H1 (cell line): ENCODE measurements at regions of chr1 and their contacts with region 1.

Region 1: GRCh38 chr1:223845810-223846682 is at the start of gene TP53BP2:
- DNase-seq: peak; percentile 65 to 88
- H3K4me3 ChIP-seq: peak within 1 kb of the TSS; percentile 86 to 92 (median 88)
- H3K27ac ChIP-seq: peak within 1 kb of the TSS; percentile 99
- H3K4me1 ChIP-seq: no peaks in the 10 kb centered on the region; a peak in 4 of 7 replicates
- H3K27me3 ChIP-seq: no peaks in the 10 kb centered on the region; a peak in 1 of 7 replicates
- CTCF ChIP-seq: peak; percentile 54 to 59 (median 57)
- EP300 ChIP-seq: no peak
- POLR2A ChIP-seq: peak; percentile 50 to 88
- RAD21 ChIP-seq: peak; percentile 26 to 38; a peak in 3 of 4 replicates
- total RNA-seq, gene TP53BP2: 38.7 and 38.9 TPM in 2 replicates

Region 2: DNA sequence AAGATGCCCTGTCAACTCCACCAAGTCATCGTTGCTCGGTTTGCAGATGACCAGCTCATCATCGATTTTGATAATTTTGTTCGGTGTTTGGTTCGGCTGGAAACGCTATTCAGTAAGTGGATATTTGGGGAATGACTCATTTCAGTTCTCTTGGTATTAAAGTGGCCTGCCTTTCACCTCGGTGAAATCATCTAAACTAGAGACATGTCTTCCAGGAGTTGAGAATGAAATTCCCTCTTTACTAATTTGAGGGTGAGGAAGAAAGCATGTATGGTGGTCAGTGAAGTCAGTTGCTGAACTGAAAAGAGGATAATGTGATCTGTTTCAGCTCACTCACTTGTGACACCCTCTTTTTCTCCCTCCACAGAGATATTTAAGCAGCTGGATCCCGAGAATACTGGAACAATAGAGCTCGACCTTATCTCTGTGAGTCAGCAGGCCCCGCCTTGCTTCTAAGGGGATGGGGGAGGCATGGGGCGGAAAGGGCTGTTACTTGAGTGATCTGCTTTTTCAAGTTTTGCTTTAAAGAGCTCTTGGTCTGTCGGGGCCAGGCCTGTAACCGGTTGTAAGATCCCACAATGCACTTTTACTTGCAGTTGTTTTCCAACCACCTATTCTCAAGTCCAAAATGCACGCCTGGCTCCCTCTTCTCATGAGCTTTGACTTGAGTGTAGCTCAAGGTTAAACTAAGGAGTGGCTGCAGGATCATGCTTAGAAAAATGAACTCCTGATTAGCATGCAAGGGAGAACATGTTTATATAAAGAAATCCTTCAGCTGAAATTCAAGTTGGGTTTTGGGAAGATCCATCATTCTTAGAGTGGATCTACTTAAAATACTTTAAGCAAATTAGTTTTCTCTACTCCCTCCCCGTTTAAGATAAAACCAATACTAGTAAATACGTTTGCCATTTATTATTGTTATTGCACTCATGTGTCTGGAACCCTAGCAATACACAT is 74.0 kb before region 1 on chr1:
- CTCF ChIA-PET with region 1: no interaction called
- POLR2A ChIA-PET with region 1: no interaction called
- DNase-seq: peak in 1 of 2 experiments; percentile 45
- H3K4me3 ChIP-seq: no peak overlapping the region
- H3K27ac ChIP-seq: no peak overlapping the region
- H3K4me1 ChIP-seq: peaks cover 0 to 5% (median 2%) of the 10 kb centered on the region in 4 experiments; a peak in 2 of 7 replicates
- H3K27me3 ChIP-seq: no peaks in the 10 kb centered on the region
- CTCF ChIP-seq: no peak
- EP300 ChIP-seq: no peak
- POLR2A ChIP-seq: no peak
- RAD21 ChIP-seq: no peak

Region 3: DNA sequence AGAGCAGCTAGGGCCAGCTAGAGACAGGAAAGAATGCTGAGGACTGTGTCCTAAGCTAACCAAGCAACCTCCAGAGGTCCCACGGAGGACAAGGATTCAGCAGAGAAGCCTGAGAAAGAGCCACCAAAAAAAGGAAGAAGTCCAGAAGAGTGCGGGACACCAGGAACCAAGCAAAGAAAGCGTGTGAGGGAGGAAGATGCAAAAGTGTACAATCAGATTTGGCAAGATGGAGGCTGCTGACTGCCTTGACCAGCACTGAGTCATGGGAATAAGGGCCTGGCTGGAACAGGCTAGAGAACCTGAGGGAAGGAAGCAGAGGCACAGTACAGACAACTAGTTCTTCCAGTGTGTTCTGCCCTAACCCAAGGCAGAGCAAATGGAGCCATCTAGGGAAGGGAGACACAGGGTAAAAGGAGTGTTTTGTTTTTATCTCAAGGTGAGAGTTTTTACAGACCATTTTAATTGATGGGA is 18.8 kb before region 1 on chr1:
- CTCF ChIA-PET with region 1: interaction called, 5 read pairs
- POLR2A ChIA-PET with region 1: interaction called, 28 read pairs
- DNase-seq: no peak
- H3K4me3 ChIP-seq: no peak overlapping the region
- H3K27ac ChIP-seq: no peak overlapping the region
- H3K4me1 ChIP-seq: peaks cover 0 to 7% (median 3%) of the 10 kb centered on the region in 4 experiments; a peak in 5 of 7 replicates
- H3K27me3 ChIP-seq: no peaks in the 10 kb centered on the region
- CTCF ChIP-seq: no peak
- EP300 ChIP-seq: no peak
- POLR2A ChIP-seq: no peak
- RAD21 ChIP-seq: no peak

Region 4: DNA sequence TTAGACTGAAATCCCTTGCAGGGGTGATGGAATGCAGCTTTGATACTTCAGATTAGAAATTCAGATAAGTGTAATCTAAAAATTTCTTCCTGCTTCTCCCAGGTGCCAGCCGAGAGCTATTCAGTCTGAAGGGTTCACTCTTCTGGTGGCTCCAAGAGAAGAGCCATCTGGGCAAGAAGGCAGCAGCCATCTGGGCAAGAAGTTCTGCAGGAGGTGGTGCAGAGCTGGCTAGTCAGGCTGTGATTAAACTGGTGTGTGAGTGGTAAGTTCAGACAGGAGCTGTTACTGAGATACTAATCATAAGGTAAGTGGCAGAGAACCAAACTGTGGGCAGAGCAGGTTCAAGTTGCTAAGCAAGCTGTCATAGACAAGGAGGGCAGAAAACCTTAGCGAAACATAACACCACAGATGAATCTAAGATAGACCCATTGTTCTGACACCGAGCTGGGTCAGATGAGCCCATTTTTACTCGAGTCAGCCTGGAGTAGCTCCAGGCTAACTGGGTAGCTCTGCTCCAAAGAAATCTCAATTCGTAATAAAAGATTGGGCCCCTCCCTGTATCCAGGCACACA is 14.1 kb after region 1 on chr1:
- CTCF ChIA-PET with region 1: interaction called, 3 read pairs
- POLR2A ChIA-PET with region 1: interaction called, 21 read pairs
- DNase-seq: no peak
- H3K4me3 ChIP-seq: no peak overlapping the region
- H3K27ac ChIP-seq: no peak overlapping the region
- H3K4me1 ChIP-seq: no peaks in the 10 kb centered on the region
- H3K27me3 ChIP-seq: no peaks in the 10 kb centered on the region
- CTCF ChIP-seq: no peak
- EP300 ChIP-seq: no peak
- POLR2A ChIP-seq: no peak
- RAD21 ChIP-seq: no peak

Region 5: GRCh38 chr1:223885614-223886013 is 39.6 kb after region 1 on chr1:
- CTCF ChIA-PET with region 1: interaction called, 6 read pairs
- POLR2A ChIA-PET with region 1: interaction called, 10 read pairs
- DNase-seq: no peak
- H3K4me3 ChIP-seq: no peak overlapping the region
- H3K27ac ChIP-seq: no peak overlapping the region
- H3K4me1 ChIP-seq: peaks cover 0 to 8% (median 2%) of the 10 kb centered on the region in 4 experiments; a peak in 4 of 7 replicates
- H3K27me3 ChIP-seq: no peaks in the 10 kb centered on the region
- CTCF ChIP-seq: no peak
- EP300 ChIP-seq: no peak
- POLR2A ChIP-seq: no peak
- RAD21 ChIP-seq: no peak

Region 6: GRCh38 chr1:224014330-224014649 is 168.2 kb after region 1 on chr1:
- CTCF ChIA-PET with region 1: no interaction called
- POLR2A ChIA-PET with region 1: no interaction called
- DNase-seq: no peak
- H3K4me3 ChIP-seq: no peak overlapping the region
- H3K27ac ChIP-seq: no peak overlapping the region
- H3K4me1 ChIP-seq: no peaks in the 10 kb centered on the region
- H3K27me3 ChIP-seq: no peaks in the 10 kb centered on the region
- CTCF ChIP-seq: no peak
- EP300 ChIP-seq: no peak
- POLR2A ChIP-seq: no peak
- RAD21 ChIP-seq: no peak

Region 7: GRCh38 chr1:224223819-224224714 is 378.0 kb after region 1 on chr1:
- CTCF ChIA-PET with region 1: no interaction called
- POLR2A ChIA-PET with region 1: no interaction called
- DNase-seq: no peak
- H3K4me3 ChIP-seq: no peak overlapping the region
- H3K27ac ChIP-seq: no peak overlapping the region
- H3K4me1 ChIP-seq: peaks cover 0 to 4% (median 2%) of the 10 kb centered on the region in 4 experiments; a peak in 2 of 7 replicates
- H3K27me3 ChIP-seq: no peaks in the 10 kb centered on the region; a peak in 1 of 7 replicates
- CTCF ChIP-seq: no peak
- EP300 ChIP-seq: no peak
- POLR2A ChIP-seq: no peak
- RAD21 ChIP-seq: no peak